AG04450 (cell line): ENCODE measurements at regions of chr11 and their contacts with region 1.

Region 1: DNA sequence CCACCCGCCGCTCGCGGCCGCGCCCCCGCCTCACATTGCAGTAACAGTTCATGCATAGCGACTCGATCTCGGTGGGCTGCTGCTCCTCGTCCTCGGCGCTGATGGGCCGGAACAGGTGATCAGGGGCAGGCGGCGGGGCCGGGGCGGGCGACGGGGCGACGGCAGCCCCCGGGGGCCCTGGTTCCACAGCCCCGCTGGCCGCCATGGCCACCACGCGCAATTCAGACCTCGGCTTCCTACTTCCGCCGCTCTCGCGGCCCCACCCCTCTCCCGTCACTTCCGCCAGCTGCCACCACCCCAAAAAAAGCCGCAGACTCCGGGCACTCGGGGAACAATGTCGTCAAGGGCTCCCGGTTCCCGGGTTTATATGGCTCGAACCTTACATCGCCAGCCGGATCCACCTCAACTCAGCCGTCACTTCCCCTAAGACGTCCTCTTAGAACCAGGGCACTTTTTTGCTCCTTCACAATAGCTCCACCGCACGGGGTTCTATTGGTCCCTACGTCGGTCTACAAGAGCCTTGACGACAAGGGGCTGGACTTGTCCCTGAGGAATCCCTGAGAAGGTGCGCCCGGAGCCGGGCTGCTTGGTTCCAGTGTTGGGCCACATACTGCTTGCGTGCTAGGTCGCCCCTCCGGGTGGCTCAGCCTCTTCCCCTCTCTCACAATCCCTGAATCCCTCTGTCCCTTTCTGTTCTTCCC is at the start of gene ZPR1:
- DNase-seq: no peak
- H3K4me3 ChIP-seq: peak within 1 kb of the TSS; percentile 89
- H3K27ac ChIP-seq: peak within 1 kb of the TSS; percentile 65
- H3K27me3 ChIP-seq: no peaks in the 10 kb centered on the region
- CTCF ChIP-seq: peak; percentile 7; the same call in 1 of the 2 replicates
- polyA plus RNA-seq, gene ZPR1: 57.1 and 57.7 TPM in 2 replicates

Region 2: GRCh38 chr11:116742104-116742503 is 45.8 kb before region 1 on chr11:
- CTCF ChIA-PET with region 1: no interaction called
- POLR2A ChIA-PET with region 1: no interaction called
- DNase-seq: no peak
- H3K4me3 ChIP-seq: no peak overlapping the region
- H3K27ac ChIP-seq: no peak overlapping the region
- H3K27me3 ChIP-seq: no peaks in the 10 kb centered on the region
- CTCF ChIP-seq: no peak

Region 3: DNA sequence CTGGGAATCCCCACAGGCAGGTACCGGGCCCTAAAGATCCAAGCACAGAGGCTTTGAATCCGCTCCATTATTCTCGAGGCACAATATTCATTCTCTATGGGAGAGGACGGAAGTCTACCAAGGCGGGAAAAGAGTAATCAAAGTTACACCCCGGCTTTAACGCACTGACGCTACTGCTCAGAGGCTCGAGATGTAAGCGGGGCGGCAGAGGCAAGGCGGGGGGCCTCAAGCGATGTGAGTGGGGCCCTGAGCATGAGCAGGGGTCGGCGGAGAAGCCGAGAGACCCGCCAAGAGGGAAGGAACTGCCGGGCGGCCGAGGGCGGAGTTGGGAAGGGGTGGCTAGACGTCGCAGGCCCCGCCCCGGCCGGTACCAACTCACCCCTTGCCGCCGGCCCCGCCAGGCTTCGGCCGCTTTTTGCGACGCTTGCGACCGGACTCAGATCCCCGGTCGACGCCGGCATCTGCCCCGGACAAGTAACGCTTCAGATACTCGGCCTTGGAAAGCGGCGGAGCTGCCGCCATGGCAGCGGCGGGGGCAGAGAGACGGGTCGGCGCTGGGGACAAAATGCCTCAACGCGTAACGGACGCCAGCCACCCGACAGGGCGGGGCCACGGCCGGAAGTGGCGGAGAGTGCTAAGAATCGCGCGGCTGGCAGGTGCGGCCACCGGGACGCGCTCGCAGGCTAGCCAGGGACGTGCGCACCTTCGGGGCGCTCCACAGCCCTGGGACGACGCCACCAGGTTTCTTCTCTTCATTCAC is 15.3 kb before region 1 on chr11 and contains the start of gene BUD13:
- CTCF ChIA-PET with region 1: interaction called, 9 read pairs
- POLR2A ChIA-PET with region 1: interaction called, 11 read pairs
- DNase-seq: peak; percentile 37
- H3K4me3 ChIP-seq: peak within 1 kb of the TSS; percentile 89
- H3K27ac ChIP-seq: peak within 1 kb of the TSS; percentile 78
- H3K27me3 ChIP-seq: no peaks in the 10 kb centered on the region
- CTCF ChIP-seq: no peak
- polyA plus RNA-seq, gene BUD13: 11.8 and 12.3 TPM in 2 replicates

Region 4: GRCh38 chr11:116835791-116836631 is 48.1 kb after region 1 on chr11:
- CTCF ChIA-PET with region 1: interaction called, 138 read pairs
- POLR2A ChIA-PET with region 1: interaction called, 8 read pairs
- DNase-seq: peak; percentile 87
- H3K4me3 ChIP-seq: peak overlapping the region; percentile 55
- H3K27ac ChIP-seq: peak overlapping the region; percentile 21
- H3K27me3 ChIP-seq: no peaks in the 10 kb centered on the region
- CTCF ChIP-seq: peak; percentile 69

Region 5: GRCh38 chr11:117107701-117108590 is 320.0 kb after region 1 on chr11:
- CTCF ChIA-PET with region 1: interaction called, 209 read pairs
- POLR2A ChIA-PET with region 1: no interaction called
- DNase-seq: no peak
- H3K4me3 ChIP-seq: no peak overlapping the region
- H3K27ac ChIP-seq: no peak overlapping the region
- H3K27me3 ChIP-seq: no peaks in the 10 kb centered on the region
- CTCF ChIP-seq: no peak

Region 6: GRCh38 chr11:117217141-117218084 is 429.5 kb after region 1 on chr11:
- CTCF ChIA-PET with region 1: interaction called, 11 read pairs
- POLR2A ChIA-PET with region 1: no interaction called
- DNase-seq: peak; percentile 65
- H3K4me3 ChIP-seq: no peak overlapping the region
- H3K27ac ChIP-seq: peak overlapping the region; percentile 97
- H3K27me3 ChIP-seq: no peaks in the 10 kb centered on the region
- CTCF ChIP-seq: no peak